ENCODE measurements at regions of chr6 and their contacts with region 1.

Region 1: GRCh38 chr6:17589406-17590096 is 10.6 kb upstream of the FAM8A1 start:
- DNase-seq: peak; percentile 91
- ATAC-seq: peak; percentile 93
- H3K4me3 ChIP-seq: no peak overlapping the region
- H3K27ac ChIP-seq: no peak overlapping the region
- H3K4me1 ChIP-seq: peaks cover 9 to 21% of the 10 kb centered on the region in 2 experiments; a peak in 3 of 4 replicates
- H3K27me3 ChIP-seq: no peaks in the 10 kb centered on the region
- CTCF ChIP-seq: peak in 1 of 3 experiments; percentile 59; a peak in 1 of 6 replicates
- POLR2A ChIP-seq: no peak
- RAD21 ChIP-seq: peak; percentile 83

Region 2: GRCh38 chr6:17417817-17418216 is 171.7 kb before region 1 on chr6:
- CTCF ChIA-PET with region 1: no interaction called
- POLR2A ChIA-PET with region 1: no interaction called
- RAD21 ChIA-PET with region 1: no interaction called
- intact Hi-C with region 1: no loop called
- DNase-seq: no peak
- ATAC-seq: peak; percentile 73
- H3K4me3 ChIP-seq: no peak overlapping the region
- H3K27ac ChIP-seq: no peak overlapping the region
- H3K4me1 ChIP-seq: peaks cover 4 to 25% of the 10 kb centered on the region in 2 experiments; a peak in 3 of 4 replicates
- H3K27me3 ChIP-seq: no peaks in the 10 kb centered on the region
- CTCF ChIP-seq: no peak
- POLR2A ChIP-seq: no peak
- RAD21 ChIP-seq: no peak

Region 3: GRCh38 chr6:17599885-17600526 is 10.5 kb after region 1 on chr6 and contains the start of gene FAM8A1:
- CTCF ChIA-PET with region 1: interaction called, 4 read pairs
- POLR2A ChIA-PET with region 1: interaction called, 13 read pairs
- RAD21 ChIA-PET with region 1: interaction called in 1 of 2 experiments, 3 read pairs
- intact Hi-C with region 1: no loop called
- DNase-seq: peak; percentile 84
- ATAC-seq: peak; percentile 89
- H3K4me3 ChIP-seq: peak within 1 kb of the TSS; percentile 66 to 79
- H3K27ac ChIP-seq: peak within 1 kb of the TSS; percentile 64
- H3K4me1 ChIP-seq: peaks cover 3 to 26% of the 10 kb centered on the region in 2 experiments; a peak in 2 of 4 replicates
- H3K27me3 ChIP-seq: no peaks in the 10 kb centered on the region
- CTCF ChIP-seq: peak in 2 of 3 experiments; percentile 32 to 60; a peak in 4 of 6 replicates
- POLR2A ChIP-seq: peak; percentile 62
- RAD21 ChIP-seq: no peak
- total RNA-seq, gene FAM8A1: 13.4 TPM

Region 4: DNA sequence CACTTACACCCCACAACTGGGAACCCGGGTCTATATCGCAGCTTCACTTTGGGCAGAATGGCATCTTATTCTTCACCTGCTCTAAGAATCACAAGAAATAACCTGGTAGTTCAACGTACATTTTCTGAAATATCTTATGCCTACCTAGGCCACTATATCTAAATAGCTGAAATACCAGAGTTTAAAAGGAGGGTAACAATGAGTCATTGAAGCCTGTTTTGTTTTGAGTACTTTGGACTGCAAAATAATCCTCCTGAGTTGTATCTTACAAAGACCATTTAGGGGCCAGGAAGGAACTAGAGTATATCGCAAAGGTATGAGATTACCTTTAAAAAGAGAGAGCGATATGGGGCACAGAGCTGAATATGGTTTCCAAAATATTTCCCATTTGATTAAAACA is 213.9 kb after region 1 on chr6:
- CTCF ChIA-PET with region 1: interaction called, 12 read pairs
- POLR2A ChIA-PET with region 1: no interaction called
- RAD21 ChIA-PET with region 1: no interaction called
- intact Hi-C with region 1: loop called (anchors 2 kb)
- DNase-seq: no peak
- ATAC-seq: no peak
- H3K4me3 ChIP-seq: no peak overlapping the region
- H3K27ac ChIP-seq: no peak overlapping the region
- H3K4me1 ChIP-seq: no peaks in the 10 kb centered on the region
- H3K27me3 ChIP-seq: no peaks in the 10 kb centered on the region
- CTCF ChIP-seq: no peak
- POLR2A ChIP-seq: no peak
- RAD21 ChIP-seq: no peak

Measured in HCT116 (cell line).